A673 (cell line): ENCODE measurements at regions of chr3 and their contacts with region 1.

Region 1: DNA sequence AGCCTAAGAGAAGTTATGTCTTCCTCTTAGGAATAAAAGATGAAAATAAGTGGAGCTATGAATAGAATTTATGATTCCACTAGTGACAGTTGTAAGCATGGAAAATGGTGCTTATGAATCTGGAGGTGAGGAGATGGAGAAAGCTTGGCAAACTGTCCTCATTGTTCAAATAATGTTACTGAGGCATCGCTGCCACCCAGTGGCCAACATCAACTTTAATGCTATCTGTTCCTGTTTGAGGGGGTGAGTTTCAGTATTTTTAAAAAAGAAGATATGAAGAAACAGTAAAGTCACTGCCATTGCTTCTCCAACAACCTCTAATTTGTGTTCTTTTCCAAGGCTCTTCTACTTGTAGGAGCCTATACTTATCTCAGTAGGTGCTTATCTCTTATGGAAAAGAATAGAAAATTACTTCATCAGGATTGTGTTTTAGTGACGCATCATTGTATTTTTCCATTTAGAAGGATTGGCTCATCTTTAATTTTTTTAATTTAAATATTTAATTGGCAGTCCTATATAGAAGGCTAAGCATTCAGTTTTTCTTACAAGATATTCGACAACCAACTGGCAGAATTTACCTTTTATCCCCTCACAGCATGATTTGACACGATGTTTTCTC is 260.4 kb upstream of the P2RY1 start:
- DNase-seq: peak; percentile 76
- H3K4me3 ChIP-seq: no peak overlapping the region
- H3K27ac ChIP-seq: no peak overlapping the region
- H3K4me1 ChIP-seq: no peaks in the 10 kb centered on the region
- H3K27me3 ChIP-seq: no peaks in the 10 kb centered on the region
- CTCF ChIP-seq: peak; percentile 70

Region 2: GRCh38 chr3:151501923-151502632 is 1072.5 kb before region 1 on chr3:
- CTCF ChIA-PET with region 1: no interaction called
- POLR2A ChIA-PET with region 1: no interaction called
- intact Hi-C with region 1: no loop called
- DNase-seq: no peak
- H3K4me3 ChIP-seq: no peak overlapping the region
- H3K27ac ChIP-seq: no peak overlapping the region
- H3K4me1 ChIP-seq: peaks cover 15% of the 10 kb centered on the region
- H3K27me3 ChIP-seq: no peaks in the 10 kb centered on the region
- CTCF ChIP-seq: no peak

Region 3: GRCh38 chr3:152071924-152072323 is 502.6 kb before region 1 on chr3:
- CTCF ChIA-PET with region 1: no interaction called
- POLR2A ChIA-PET with region 1: no interaction called
- intact Hi-C with region 1: loop called (anchors 10 kb)
- DNase-seq: peak; percentile 64
- H3K4me3 ChIP-seq: no peak overlapping the region
- H3K27ac ChIP-seq: no peak overlapping the region
- H3K4me1 ChIP-seq: peaks cover 11% of the 10 kb centered on the region
- H3K27me3 ChIP-seq: no peaks in the 10 kb centered on the region
- CTCF ChIP-seq: peak; percentile 56

Region 4: GRCh38 chr3:152100491-152101132 is 474.0 kb before region 1 on chr3:
- CTCF ChIA-PET with region 1: no interaction called
- POLR2A ChIA-PET with region 1: no interaction called
- intact Hi-C with region 1: no loop called
- DNase-seq: no peak
- H3K4me3 ChIP-seq: no peak overlapping the region
- H3K27ac ChIP-seq: no peak overlapping the region
- H3K4me1 ChIP-seq: no peaks in the 10 kb centered on the region
- H3K27me3 ChIP-seq: no peaks in the 10 kb centered on the region
- CTCF ChIP-seq: no peak